ENCODE measurements at regions of chr7 and their contacts with region 1.

Region 1: DNA sequence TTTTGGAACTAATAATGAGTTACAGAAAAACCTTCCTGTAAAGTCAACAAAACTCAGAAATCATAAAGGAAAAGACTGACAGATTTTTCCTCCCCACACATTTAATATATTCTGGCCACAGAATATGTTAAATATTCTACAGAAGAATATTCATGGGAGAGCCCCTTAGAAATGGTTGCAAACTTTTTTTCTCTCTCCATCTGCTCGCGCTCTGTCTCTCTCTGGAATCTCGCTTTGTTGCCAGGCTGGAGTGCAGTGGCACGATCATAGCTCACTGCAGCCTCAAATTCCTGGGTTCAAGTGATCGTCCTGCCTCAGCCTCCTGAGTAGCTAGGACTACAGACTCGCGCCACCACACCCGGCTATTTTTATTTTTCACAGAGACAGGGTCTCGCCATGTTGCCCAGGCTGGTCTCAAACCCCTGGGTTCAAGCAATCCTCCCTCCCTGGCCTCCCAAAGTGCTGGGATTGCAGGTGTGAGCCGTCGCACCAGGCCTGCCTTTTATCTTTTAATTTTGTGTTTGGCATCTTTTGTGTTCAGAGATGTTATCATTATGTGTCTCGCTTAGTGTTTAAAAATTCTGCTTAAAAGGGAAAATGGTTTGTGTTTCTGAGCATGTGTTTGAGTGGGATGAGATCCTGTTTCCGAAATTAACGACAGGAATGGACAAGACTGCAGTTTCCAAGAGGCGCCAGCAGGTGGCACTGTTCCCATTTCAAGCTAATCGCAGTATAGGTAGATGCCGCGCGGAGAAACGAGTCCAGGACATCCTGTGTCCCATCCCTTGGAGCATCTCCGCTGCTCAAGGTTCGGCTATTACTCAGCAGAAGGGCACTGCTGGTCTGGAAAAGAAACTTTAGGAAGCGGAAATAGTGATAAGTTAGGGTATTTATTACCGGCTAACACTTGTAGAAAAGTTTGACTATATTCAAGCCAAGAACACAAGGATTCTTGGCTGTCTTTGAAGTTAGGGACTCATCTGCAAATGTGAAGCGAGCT is 23.1 kb upstream of the ST7 start:
- DNase-seq: peak; percentile 84 to 94 (median 86)
- ATAC-seq: peak; percentile 92
- H3K4me3 ChIP-seq: no peak overlapping the region
- H3K27ac ChIP-seq: no peak overlapping the region
- H3K4me1 ChIP-seq: peaks cover 0 to 2% of the 10 kb centered on the region in 2 experiments; a peak in 1 of 5 replicates
- H3K27me3 ChIP-seq: 0 out of 5 replicates have a peak, but pooled peaks cover 0 to 2% of the 10 kb centered on the region in 2 experiments
- CTCF ChIP-seq: peak; percentile 96 to 99 (median 98)
- EP300 ChIP-seq: no peak
- POLR2A ChIP-seq: no peak
- RAD21 ChIP-seq: peak; percentile 98

Region 2: DNA sequence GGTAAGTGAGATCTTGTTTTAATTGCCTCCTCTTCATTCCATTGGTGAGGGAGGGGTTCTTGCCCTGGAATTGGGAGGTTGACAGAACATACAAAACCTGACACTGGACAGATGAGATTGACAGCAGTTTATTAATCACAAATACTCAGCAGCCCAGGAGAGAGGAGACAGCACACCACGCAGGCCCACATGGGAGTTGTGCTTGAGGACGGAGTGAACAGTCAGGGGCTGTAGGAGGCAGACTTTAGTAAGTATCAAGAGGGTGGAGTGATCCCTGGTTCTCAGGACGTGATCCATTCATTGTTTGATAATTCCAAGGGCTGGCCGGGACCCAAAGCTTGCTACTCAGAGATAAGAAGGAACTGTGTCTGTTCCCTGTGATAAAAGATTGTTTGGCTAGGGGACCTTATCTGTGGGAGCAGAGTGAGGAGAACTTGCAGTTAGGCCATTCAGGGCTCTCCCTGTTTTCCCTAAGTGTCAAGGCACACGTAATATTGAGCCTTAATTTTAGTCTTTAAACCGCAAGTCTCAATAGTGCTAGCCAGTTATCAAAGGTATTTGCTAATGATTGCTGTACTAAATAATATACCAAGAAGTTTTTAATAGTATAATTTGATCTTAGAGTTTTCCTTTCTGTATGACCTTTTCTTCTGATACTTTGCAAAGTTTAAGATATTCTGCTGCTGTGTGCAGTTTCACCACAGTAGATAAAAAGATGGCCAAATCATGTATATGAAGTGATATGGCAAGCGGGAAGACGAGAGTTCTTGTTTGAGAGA is 53.4 kb before region 1 on chr7:
- CTCF ChIA-PET with region 1: no interaction called
- POLR2A ChIA-PET with region 1: no interaction called
- in situ Hi-C with region 1: no loop called
- intact Hi-C with region 1: loop called (anchors 2 kb)
- DNase-seq: peak; percentile 88 to 99 (median 92)
- ATAC-seq: peak; percentile 99
- H3K4me3 ChIP-seq: no peak overlapping the region; the same call in 1 of the 2 replicates
- H3K27ac ChIP-seq: peak overlapping the region; percentile 64
- H3K4me1 ChIP-seq: peaks cover 14 to 34% of the 10 kb centered on the region in 2 experiments
- H3K27me3 ChIP-seq: no peaks in the 10 kb centered on the region
- CTCF ChIP-seq: peak; percentile 68 to 83 (median 80)
- EP300 ChIP-seq: peak; percentile 100
- POLR2A ChIP-seq: no peak
- RAD21 ChIP-seq: peak; percentile 42 to 70; a peak in 3 of 4 replicates

Region 3: DNA sequence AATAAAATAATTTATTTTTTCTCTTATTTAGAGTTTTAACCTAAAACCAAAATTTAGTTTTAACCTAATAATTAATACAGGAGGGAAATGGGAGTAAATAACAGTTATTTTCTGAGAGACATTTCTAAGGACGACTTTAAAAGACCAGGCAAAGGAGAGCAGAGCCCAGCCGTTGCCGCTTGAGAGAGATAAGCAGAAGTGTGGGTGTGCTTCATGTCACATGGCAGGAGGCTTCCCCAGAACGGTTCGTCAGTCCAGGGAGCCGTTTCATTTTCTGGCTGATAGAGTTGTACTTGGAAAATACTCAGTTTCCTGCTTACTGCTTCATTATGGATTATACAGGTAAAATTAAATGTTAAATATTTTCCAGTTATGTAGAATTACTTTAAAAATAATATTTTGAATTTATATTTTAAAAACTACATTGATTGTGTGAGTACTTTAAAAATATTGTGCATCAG is 84.5 kb after region 1 on chr7:
- CTCF ChIA-PET with region 1: interaction called, 3 read pairs
- POLR2A ChIA-PET with region 1: no interaction called
- in situ Hi-C with region 1: no loop called
- intact Hi-C with region 1: loop called (anchors 1 kb)
- DNase-seq: peak; percentile 79 to 97 (median 89)
- ATAC-seq: peak; percentile 88
- H3K4me3 ChIP-seq: peak overlapping the region; percentile 40
- H3K27ac ChIP-seq: peak overlapping the region; percentile 85
- H3K4me1 ChIP-seq: peaks cover 13 to 72% of the 10 kb centered on the region in 2 experiments
- H3K27me3 ChIP-seq: no peaks in the 10 kb centered on the region
- CTCF ChIP-seq: no peak
- EP300 ChIP-seq: peak; percentile 95
- POLR2A ChIP-seq: peak; percentile 81
- RAD21 ChIP-seq: peak in 1 of 2 experiments; percentile 17; a peak in 1 of 4 replicates

Region 4: DNA sequence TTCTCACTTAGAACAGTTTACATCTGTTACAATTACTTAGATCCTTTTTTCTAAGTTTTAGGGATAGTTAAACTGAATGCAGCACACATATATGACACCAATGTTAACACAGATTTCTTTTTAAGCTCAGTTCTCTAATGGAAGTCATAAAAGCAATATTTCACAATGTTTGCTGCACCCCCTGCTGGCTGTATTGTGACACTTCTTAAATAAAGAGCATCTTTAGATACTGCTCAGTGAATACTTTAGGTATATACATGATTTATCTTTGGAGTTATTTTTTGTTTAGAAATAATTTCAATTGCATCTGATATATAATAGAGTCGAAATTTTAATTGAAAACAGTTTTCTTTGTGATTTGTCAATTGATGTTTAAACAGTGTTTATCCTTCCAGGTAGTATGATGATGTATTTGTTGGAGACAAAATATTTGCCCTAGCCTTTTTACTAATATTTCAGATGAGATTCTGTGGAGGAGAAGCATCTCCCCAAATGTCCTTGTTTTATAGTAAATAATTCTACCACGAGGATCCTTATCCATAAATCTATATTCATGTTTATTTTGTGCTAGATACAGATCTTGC is 197.5 kb after region 1 on chr7:
- CTCF ChIA-PET with region 1: interaction called, 54 read pairs
- POLR2A ChIA-PET with region 1: interaction called, 4 read pairs
- in situ Hi-C with region 1: loop called (anchors 5 kb)
- intact Hi-C with region 1: loop called (anchors 1 kb)
- DNase-seq: peak; percentile 34 to 80 (median 55)
- ATAC-seq: peak; percentile 79
- H3K4me3 ChIP-seq: no peak overlapping the region
- H3K27ac ChIP-seq: no peak overlapping the region
- H3K4me1 ChIP-seq: peaks cover 0 to 15% of the 10 kb centered on the region in 2 experiments; a peak in 3 of 5 replicates
- H3K27me3 ChIP-seq: no peaks in the 10 kb centered on the region
- CTCF ChIP-seq: peak; percentile 57 to 90 (median 70); a peak in 5 of 6 replicates
- EP300 ChIP-seq: no peak
- POLR2A ChIP-seq: no peak
- RAD21 ChIP-seq: peak; percentile 82 to 90